ENCODE measurements at regions of chr1 and their contacts with region 1.

Region 1: DNA sequence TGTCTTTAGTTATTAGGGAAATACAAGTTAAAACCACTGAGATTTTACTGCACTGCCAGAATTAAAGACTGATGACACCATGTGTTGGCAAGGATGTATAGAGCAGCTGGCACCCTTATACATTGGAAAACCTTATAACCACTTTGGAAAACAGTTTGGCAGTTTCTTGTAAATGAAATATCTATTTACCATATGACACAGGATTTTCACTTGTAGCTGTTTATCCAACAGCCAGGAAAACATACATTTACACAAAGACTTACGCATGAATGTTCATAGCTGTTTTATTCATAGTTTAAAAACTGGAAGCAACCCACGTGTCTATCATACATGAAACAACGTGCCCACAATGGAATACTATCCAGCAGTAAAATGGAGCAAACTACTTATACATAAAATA is 45.3 kb downstream of the PRRC2C start:
- DNase-seq: no peak
- ATAC-seq: no peak
- H3K4me3 ChIP-seq: no peak overlapping the region
- H3K27ac ChIP-seq: no peak overlapping the region
- H3K4me1 ChIP-seq: no peaks in the 10 kb centered on the region
- H3K27me3 ChIP-seq: no peaks in the 10 kb centered on the region
- CTCF ChIP-seq: no peak
- EP300 ChIP-seq: no peak
- POLR2A ChIP-seq: no peak
- RAD21 ChIP-seq: no peak

Region 2: GRCh38 chr1:171545523-171545922 is 14.8 kb after region 1 on chr1:
- CTCF ChIA-PET with region 1: interaction called, 3 read pairs
- POLR2A ChIA-PET with region 1: no interaction called
- RAD21 ChIA-PET with region 1: no interaction called
- SMC1A ChIA-PET with region 1: interaction called, 4 read pairs
- in situ Hi-C with region 1: no loop called
- intact Hi-C with region 1: loop called (anchors 2 kb)
- DNase-seq: no peak
- ATAC-seq: no peak
- H3K4me3 ChIP-seq: no peak overlapping the region
- H3K27ac ChIP-seq: no peak overlapping the region
- H3K4me1 ChIP-seq: no peaks in the 10 kb centered on the region
- H3K27me3 ChIP-seq: no peaks in the 10 kb centered on the region
- CTCF ChIP-seq: no peak
- EP300 ChIP-seq: no peak
- POLR2A ChIP-seq: no peak
- RAD21 ChIP-seq: no peak

Region 3: GRCh38 chr1:171583581-171584201 is 53.0 kb after region 1 on chr1:
- CTCF ChIA-PET with region 1: no interaction called
- POLR2A ChIA-PET with region 1: no interaction called
- RAD21 ChIA-PET with region 1: interaction called, 3 read pairs
- SMC1A ChIA-PET with region 1: interaction called, 5 read pairs
- in situ Hi-C with region 1: no loop called
- intact Hi-C with region 1: loop called (anchors 5 kb)
- DNase-seq: no peak
- ATAC-seq: no peak
- H3K4me3 ChIP-seq: no peak overlapping the region
- H3K27ac ChIP-seq: no peak overlapping the region
- H3K4me1 ChIP-seq: no peaks in the 10 kb centered on the region
- H3K27me3 ChIP-seq: no peaks in the 10 kb centered on the region
- CTCF ChIP-seq: no peak
- EP300 ChIP-seq: no peak
- POLR2A ChIP-seq: no peak
- RAD21 ChIP-seq: no peak